SK-N-SH (cell line): ENCODE measurements at regions of chr19 and their contacts with region 1.

Region 1: DNA sequence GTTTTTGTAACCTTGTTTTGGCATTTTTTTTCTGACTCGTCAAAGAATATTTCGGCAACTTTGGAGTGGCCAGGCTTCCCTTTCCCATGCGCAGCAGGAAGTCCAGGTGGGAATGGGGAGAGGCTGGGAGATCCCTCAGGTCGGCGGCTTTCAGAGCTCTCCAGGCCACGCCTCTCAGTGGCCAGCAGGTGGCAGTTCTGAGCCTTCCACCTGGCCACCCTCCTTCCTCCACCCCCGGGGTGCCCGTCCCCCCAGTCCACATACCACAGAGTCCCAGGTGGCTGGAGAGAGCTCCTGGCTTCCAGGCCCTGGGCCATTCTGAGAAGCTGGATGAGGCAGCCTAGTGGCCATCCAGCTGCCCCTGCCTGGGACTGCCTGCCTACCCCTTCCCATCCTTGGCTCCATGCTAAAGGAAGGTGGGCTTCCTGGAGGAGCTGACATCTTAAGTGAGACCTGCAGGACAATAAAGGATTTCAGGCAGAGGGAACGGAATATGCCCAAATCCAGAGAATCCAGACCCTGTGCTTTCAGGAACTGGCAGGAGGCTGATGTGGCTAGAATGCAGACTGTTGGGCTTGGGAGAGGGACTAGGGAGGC is 46.3 kb downstream of the CCNE1 start:
- DNase-seq: peak; percentile 77
- H3K4me3 ChIP-seq: peak overlapping the region in 1 of 2 experiments; percentile 47; a peak in 1 of 4 replicates
- H3K27ac ChIP-seq: no peak overlapping the region
- H3K4me1 ChIP-seq: no peaks in the 10 kb centered on the region; a peak in 1 of 4 replicates
- H3K27me3 ChIP-seq: no peaks in the 10 kb centered on the region; the same call in 1 of the 2 replicates
- CTCF ChIP-seq: peak; percentile 56
- EP300 ChIP-seq: no peak
- RAD21 ChIP-seq: peak; percentile 51

Region 2: DNA sequence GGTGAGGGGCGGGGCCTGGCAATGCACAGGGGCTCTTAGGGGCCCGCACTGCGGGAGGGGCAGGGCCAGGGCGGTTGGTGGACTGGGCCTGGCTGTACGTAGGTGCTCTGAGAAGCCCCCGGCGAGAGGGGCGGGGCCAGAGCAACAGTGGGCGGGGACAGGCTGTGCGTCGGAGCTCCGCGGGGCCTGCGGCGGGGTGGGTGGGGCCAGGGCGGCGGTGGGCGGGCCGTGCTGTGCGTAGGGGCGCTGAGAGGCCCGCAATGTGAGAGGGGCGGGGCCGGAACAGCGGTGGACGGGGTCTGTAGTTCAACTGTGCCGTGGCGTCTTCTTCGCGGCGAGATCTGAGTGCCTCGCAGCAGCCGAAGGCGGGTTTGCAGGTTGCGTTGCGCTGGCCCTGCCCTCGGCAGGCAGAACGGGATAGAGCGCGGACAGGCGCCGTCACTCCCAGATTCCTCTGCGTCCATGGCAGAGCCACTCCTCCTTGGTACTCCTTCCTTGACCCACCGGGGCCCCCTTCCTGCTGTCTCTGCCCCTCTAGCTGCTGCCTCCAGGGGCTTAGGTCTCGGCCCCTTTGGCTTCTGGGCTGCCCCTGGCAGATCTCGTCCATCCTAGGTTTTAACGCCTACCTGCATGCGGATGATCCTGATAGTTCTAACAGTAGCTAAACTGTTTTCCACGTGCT is 13.1 kb before region 1 on chr19:
- CTCF ChIA-PET with region 1: interaction called, 19 read pairs
- POLR2A ChIA-PET with region 1: no interaction called
- DNase-seq: no peak
- H3K4me3 ChIP-seq: peak overlapping the region; percentile 67 to 77
- H3K27ac ChIP-seq: peak overlapping the region; percentile 27 to 63; a peak in 3 of 4 replicates
- H3K4me1 ChIP-seq: peaks cover 0 to 11% of the 10 kb centered on the region in 2 experiments; a peak in 1 of 4 replicates
- H3K27me3 ChIP-seq: no peaks in the 10 kb centered on the region
- CTCF ChIP-seq: 0 out of 2 replicates have a peak, but pooled peaks have one; percentile 12
- EP300 ChIP-seq: no peak
- RAD21 ChIP-seq: no peak

Region 3: DNA sequence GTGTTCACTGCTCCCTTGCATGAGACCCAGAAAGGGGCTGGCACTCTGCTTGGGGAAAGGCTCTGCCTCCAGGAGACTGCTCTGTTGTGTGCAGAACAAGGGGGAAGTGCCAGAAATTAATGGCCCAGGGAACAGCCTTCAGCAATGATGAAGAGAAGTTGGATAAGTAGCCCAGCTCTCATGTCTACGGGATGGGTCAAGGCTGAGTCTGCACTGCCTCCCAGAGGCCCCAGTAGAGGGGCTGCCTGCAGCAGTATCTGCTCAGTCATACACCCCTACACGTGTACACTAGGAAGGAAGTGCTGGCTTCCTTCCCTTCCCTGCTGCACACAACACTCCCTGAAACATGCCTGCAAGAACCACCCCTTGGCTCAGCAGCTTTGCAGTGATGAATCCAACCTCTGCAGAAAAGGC is 29.4 kb after region 1 on chr19:
- CTCF ChIA-PET with region 1: interaction called, 17 read pairs
- POLR2A ChIA-PET with region 1: no interaction called
- DNase-seq: peak; percentile 38
- H3K4me3 ChIP-seq: no peak overlapping the region
- H3K27ac ChIP-seq: no peak overlapping the region
- H3K4me1 ChIP-seq: peaks cover 0 to 6% of the 10 kb centered on the region in 2 experiments; a peak in 1 of 4 replicates
- H3K27me3 ChIP-seq: no peaks in the 10 kb centered on the region
- CTCF ChIP-seq: no peak
- EP300 ChIP-seq: no peak
- RAD21 ChIP-seq: peak; percentile 37